ENCODE measurements at regions of chr15 and their contacts with region 1.

Region 1: GRCh38 chr15:89982315-89983055 is 18.6 kb upstream of the ZNF710 start:
- DNase-seq: no peak
- H3K4me3 ChIP-seq: no peak overlapping the region
- H3K27ac ChIP-seq: no peak overlapping the region
- H3K4me1 ChIP-seq: no peaks in the 10 kb centered on the region
- H3K27me3 ChIP-seq: no peaks in the 10 kb centered on the region
- CTCF ChIP-seq: no peak

Region 2: GRCh38 chr15:89307046-89307587 is 675.4 kb before region 1 on chr15:
- CTCF ChIA-PET with region 1: no interaction called
- POLR2A ChIA-PET with region 1: no interaction called
- intact Hi-C with region 1: no loop called
- DNase-seq: no peak
- H3K4me3 ChIP-seq: no peak overlapping the region
- H3K27ac ChIP-seq: peak overlapping the region; percentile 18; the same call in 1 of the 2 replicates
- H3K4me1 ChIP-seq: no peaks in the 10 kb centered on the region
- H3K27me3 ChIP-seq: no peaks in the 10 kb centered on the region
- CTCF ChIP-seq: no peak

Region 3: GRCh38 chr15:89904519-89904918 is 78.0 kb before region 1 on chr15:
- CTCF ChIA-PET with region 1: no interaction called
- POLR2A ChIA-PET with region 1: no interaction called
- intact Hi-C with region 1: no loop called
- DNase-seq: no peak
- H3K4me3 ChIP-seq: no peak overlapping the region
- H3K27ac ChIP-seq: no peak overlapping the region
- H3K4me1 ChIP-seq: no peaks in the 10 kb centered on the region
- H3K27me3 ChIP-seq: no peaks in the 10 kb centered on the region
- CTCF ChIP-seq: no peak

Region 4: DNA sequence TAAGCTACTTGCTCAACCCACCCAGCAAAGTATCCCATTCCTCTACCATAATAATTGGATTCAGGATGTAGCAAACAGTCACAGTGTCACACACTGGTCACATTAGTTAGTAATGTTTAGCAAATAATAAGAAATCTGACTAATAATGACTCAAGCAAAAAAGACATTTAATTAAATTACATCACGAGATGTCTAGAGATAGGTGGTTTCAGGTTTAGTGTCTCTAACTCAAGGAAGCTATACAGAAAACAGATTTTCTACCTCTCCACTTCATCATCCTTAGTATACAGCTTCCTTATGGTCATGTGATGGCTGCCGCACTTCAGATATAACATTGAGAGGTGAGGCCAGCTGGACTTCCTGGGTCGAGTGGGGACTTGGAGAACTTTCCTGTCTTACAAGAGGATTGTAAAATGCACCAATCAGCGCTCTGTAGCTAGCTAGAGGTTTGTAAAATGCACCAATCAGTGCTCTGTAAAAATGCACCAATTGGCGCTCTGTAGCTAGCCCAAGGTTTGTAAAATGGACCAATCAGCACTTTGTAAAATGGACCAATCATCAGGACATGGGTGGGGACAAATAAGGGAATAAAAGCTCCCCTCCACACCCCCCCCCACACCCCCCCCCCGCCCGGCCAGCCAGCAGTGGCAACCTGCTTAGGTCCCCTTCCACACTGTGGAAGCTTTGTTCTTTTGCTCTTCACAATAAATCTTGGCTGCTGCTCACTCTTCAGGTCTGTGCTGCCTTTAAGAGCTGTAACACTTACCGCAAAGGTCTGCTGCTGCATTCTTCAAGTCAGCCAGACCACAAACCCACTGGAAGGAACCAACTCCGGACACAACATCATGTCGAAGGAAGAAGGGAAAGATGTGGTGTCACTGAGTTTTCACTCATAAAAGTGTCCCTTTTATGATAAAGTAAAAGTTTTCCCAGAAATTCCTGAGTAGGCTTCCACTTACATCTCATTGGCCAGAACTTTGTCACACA is 44.8 kb before region 1 on chr15:
- CTCF ChIA-PET with region 1: no interaction called
- POLR2A ChIA-PET with region 1: interaction called, 19 read pairs
- intact Hi-C with region 1: no loop called
- DNase-seq: peak in 1 of 2 experiments; percentile 73
- H3K4me3 ChIP-seq: no peak overlapping the region
- H3K27ac ChIP-seq: peak overlapping the region; percentile 63
- H3K4me1 ChIP-seq: peaks cover 15% of the 10 kb centered on the region
- H3K27me3 ChIP-seq: no peaks in the 10 kb centered on the region
- CTCF ChIP-seq: no peak

Region 5: GRCh38 chr15:90001683-90002427 is 19.4 kb after region 1 on chr15:
- CTCF ChIA-PET with region 1: interaction called, 17 read pairs
- POLR2A ChIA-PET with region 1: interaction called, 8 read pairs
- intact Hi-C with region 1: no loop called
- DNase-seq: peak in 1 of 2 experiments; percentile 42
- H3K4me3 ChIP-seq: peak overlapping the region; percentile 65; the same call in 1 of the 2 replicates
- H3K27ac ChIP-seq: peak overlapping the region; percentile 49
- H3K4me1 ChIP-seq: peaks cover 79% of the 10 kb centered on the region
- H3K27me3 ChIP-seq: no peaks in the 10 kb centered on the region
- CTCF ChIP-seq: no peak

Region 6: DNA sequence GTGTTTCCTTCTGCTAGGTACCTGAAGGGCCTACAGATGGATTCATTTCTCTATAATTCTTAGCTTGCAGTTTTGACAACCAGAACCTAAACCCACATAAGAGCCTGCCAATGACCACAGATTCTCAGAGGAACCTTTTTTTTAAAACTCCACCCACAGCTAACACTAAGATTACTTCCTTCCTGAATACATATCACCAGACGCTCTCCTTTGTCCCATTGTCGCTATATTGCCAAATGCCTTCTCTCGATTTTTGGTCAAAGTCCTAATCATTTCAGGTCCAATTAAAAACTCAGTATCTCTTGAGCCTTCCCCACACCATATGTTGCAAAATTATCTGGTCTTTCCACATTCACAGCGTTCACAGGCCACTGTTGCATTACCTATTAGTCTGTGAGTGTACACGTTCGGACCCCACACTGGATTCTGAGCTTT is 31.0 kb after region 1 on chr15:
- CTCF ChIA-PET with region 1: interaction called, 12 read pairs
- POLR2A ChIA-PET with region 1: no interaction called
- intact Hi-C with region 1: no loop called
- DNase-seq: no peak
- H3K4me3 ChIP-seq: no peak overlapping the region
- H3K27ac ChIP-seq: no peak overlapping the region
- H3K4me1 ChIP-seq: no peaks in the 10 kb centered on the region
- H3K27me3 ChIP-seq: no peaks in the 10 kb centered on the region
- CTCF ChIP-seq: no peak

Region 7: DNA sequence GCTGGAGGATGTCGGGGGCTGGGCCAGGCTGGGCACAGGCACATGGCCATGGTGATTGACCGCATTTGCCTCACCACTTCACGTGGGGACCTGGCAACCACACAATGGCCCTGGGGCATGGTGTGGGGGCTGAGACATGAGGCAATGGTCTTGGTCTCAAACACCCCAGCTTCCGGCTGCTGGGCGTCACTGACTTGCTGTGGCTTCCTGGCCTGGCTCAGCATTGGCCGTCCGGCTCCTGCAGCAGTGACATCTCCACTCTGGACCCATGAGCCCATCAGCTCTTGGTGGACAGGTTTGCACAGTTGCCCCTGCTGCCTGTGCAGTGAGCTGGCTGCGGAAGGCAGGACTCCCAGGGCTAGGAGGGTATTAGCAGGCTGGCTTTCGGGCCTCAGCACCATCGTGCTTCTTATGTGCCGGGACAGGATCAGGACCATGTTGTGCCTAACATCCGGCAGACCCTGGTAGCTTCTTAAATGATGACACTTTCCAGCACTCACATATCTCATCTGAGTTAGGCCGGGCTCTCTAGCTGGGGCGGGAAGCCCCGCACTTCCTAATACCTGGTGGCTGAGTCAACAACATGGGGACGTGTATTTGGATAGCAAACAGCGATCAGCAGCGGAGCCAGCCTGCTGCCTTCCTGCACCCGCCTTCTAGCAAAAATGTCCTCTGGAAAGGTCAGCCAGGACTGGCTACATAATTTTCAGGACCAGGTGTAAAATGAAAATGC is 52.8 kb after region 1 on chr15:
- CTCF ChIA-PET with region 1: no interaction called
- POLR2A ChIA-PET with region 1: no interaction called
- intact Hi-C with region 1: loop called (anchors 2 kb)
- DNase-seq: peak; percentile 88 to 90
- H3K4me3 ChIP-seq: no peak overlapping the region; the same call in 1 of the 2 replicates
- H3K27ac ChIP-seq: peak overlapping the region; percentile 88
- H3K4me1 ChIP-seq: peaks cover 57% of the 10 kb centered on the region
- H3K27me3 ChIP-seq: no peaks in the 10 kb centered on the region
- CTCF ChIP-seq: no peak

Region 8: GRCh38 chr15:90233376-90234095 is 251.1 kb after region 1 on chr15 and contains the start of gene CIB1:
- CTCF ChIA-PET with region 1: no interaction called
- POLR2A ChIA-PET with region 1: interaction called, 11 read pairs
- intact Hi-C with region 1: no loop called
- DNase-seq: peak; percentile 87 to 98
- H3K4me3 ChIP-seq: peak within 1 kb of the TSS; percentile 86
- H3K27ac ChIP-seq: peak within 1 kb of the TSS; percentile 74
- H3K4me1 ChIP-seq: peaks cover 57% of the 10 kb centered on the region
- H3K27me3 ChIP-seq: no peaks in the 10 kb centered on the region
- CTCF ChIP-seq: peak; percentile 64; the same call in 1 of the 2 replicates
- total RNA-seq, gene CIB1: 113 and 127 TPM in 2 replicates

Region 9: GRCh38 chr15:90819850-90820797 is 837.6 kb after region 1 on chr15:
- CTCF ChIA-PET with region 1: no interaction called
- POLR2A ChIA-PET with region 1: interaction called, 17 read pairs
- intact Hi-C with region 1: no loop called
- DNase-seq: no peak
- H3K4me3 ChIP-seq: no peak overlapping the region
- H3K27ac ChIP-seq: no peak overlapping the region
- H3K4me1 ChIP-seq: no peaks in the 10 kb centered on the region
- H3K27me3 ChIP-seq: no peaks in the 10 kb centered on the region
- CTCF ChIP-seq: no peak

Measured in PC-9 (cell line).